Activated CD4-positive, alpha-beta memory T cell treated with anti-CD3 and anti-CD28 coated beads, Interleukin-2, amount 10 ng/mL, durations not matched to agents 7 days and 5 days (primary cell): ENCODE measurements at regions of chr5 and their contacts with region 1.

Region 1: DNA sequence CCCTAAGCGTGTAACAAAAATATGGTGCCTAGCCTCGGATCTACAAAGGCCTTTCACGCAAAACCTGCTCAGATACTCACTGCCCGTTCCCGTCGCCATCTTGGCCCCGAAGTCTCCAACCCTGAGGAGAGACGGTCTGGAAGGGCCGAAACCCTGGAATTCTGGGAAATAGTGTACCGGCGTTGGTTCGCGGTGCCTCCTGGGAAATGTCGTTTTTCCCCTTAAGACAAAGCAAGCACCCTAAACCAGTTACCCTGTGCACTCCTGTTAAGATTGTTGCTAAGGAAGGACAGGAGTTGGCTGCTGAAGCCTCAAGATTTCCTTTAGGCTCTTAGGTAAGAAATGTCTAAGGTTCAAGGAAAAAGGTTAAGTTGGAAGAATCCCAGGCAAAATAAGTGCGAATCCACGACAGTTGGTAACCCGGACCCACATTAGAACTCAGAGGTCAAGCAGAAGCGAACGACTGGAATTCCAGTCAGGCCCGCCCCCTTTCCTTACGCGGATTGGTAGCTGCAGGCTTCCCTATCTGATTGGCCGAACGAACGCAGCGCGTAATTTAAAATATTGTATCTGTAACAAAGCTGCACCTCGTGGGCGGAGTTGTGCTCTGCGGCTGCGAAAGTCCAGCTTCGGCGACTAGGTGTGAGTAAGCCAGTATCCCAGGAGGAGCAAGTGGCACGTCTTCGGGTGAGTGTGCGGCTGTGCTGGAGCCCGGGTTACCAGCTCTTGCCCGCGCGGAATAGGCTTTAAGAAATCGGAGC is at the starts of genes BRD8 and KIF20A:
- DNase-seq: peak; percentile 94
- H3K4me3 Mint-ChIP-seq: no peak within 1 kb of the TSS
- H3K27ac Mint-ChIP-seq: no peak within 1 kb of the TSS
- H3K4me1 Mint-ChIP-seq: peaks cover 36% of the 10 kb centered on the region
- H3K27me3 Mint-ChIP-seq: no peaks in the 10 kb centered on the region
- total RNA-seq, gene BRD8: 62.9 to 72.7 TPM
- total RNA-seq, gene KIF20A: 50.7 to 55.7 TPM

Region 2: GRCh38 chr5:138213161-138214029 is 34.7 kb after region 1 on chr5 and contains the start of gene CDC23:
- CTCF ChIA-PET with region 1: interaction called, 4 read pairs
- POLR2A ChIA-PET with region 1: interaction called, 30 read pairs
- DNase-seq: peak; percentile 94
- H3K4me3 Mint-ChIP-seq: peak within 1 kb of the TSS; percentile 99
- H3K27ac Mint-ChIP-seq: peak within 1 kb of the TSS; percentile 92
- H3K4me1 Mint-ChIP-seq: peaks cover 24% of the 10 kb centered on the region
- H3K27me3 Mint-ChIP-seq: no peaks in the 10 kb centered on the region
- total RNA-seq, gene CDC23: 32.3 to 33.3 TPM

Region 3: DNA sequence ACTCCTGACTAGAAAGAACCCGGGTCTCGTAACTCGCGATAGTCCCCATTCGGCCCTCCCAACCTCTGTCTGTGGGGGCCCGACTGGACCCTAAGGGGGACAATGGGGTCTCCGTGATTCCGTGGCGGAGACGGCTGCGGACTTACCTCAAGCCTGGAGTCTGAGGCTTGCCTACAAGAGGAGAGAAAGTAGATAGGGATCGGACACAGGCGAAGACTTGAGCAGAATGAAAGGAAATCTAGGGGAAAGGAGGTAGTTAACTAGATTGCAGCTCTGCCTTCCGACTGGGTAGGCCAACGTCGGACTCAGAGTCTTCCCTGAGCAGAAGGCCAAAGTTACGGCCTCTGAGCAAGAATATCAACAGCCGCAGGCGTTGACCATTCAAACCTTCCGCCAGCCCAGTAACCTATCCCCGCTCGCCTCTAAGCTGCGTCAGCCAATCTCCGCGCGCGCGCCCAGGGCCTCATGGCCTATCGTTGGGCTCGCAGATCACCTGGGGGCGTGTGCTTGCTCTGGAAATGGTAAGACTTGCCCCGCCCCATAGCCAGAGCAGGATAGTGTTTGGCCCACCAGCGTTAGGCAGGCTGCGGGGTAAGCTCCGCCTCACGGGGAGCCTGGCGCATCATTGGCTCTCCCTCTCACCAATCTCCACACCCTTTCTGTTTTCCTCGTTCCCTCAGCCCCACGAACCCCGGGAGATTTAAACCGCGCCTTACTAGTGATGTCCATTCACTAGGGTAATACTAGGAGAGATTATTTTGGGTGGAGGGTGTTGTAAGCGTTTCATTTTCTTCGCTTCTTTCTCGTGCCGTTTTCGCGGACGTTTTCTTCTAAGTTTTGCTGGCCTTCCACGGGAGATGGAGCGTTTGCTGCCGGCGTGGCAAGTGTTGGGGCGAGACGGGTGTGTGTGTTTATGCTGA is 153.0 kb after region 1 on chr5 and contains the start of gene CDC25C:
- CTCF ChIA-PET with region 1: interaction called, 9 read pairs
- POLR2A ChIA-PET with region 1: interaction called, 20 read pairs
- DNase-seq: peak; percentile 98
- H3K4me3 Mint-ChIP-seq: peak within 1 kb of the TSS; percentile 83
- H3K27ac Mint-ChIP-seq: peak within 1 kb of the TSS; percentile 62
- H3K4me1 Mint-ChIP-seq: peaks cover 33% of the 10 kb centered on the region
- H3K27me3 Mint-ChIP-seq: no peaks in the 10 kb centered on the region
- total RNA-seq, gene CDC25C: 15.2 to 18.4 TPM